H1 (cell line): ENCODE measurements at regions of chr2 and their contacts with region 1.

Region 1: GRCh38 chr2:64922482-64923384 is 66.5 kb upstream of the SLC1A4 start:
- DNase-seq: no peak
- H3K4me3 ChIP-seq: no peak overlapping the region
- H3K27ac ChIP-seq: no peak overlapping the region
- H3K4me1 ChIP-seq: peaks cover 0 to 10% (median 5%) of the 10 kb centered on the region in 4 experiments; a peak in 6 of 7 replicates
- H3K27me3 ChIP-seq: peaks cover 0 to 7% (median 3%) of the 10 kb centered on the region in 4 experiments; a peak in 3 of 7 replicates
- CTCF ChIP-seq: peak; percentile 50 to 65 (median 60)
- EP300 ChIP-seq: no peak
- POLR2A ChIP-seq: no peak
- RAD21 ChIP-seq: peak; percentile 41 to 65; a peak in 3 of 4 replicates

Region 2: DNA sequence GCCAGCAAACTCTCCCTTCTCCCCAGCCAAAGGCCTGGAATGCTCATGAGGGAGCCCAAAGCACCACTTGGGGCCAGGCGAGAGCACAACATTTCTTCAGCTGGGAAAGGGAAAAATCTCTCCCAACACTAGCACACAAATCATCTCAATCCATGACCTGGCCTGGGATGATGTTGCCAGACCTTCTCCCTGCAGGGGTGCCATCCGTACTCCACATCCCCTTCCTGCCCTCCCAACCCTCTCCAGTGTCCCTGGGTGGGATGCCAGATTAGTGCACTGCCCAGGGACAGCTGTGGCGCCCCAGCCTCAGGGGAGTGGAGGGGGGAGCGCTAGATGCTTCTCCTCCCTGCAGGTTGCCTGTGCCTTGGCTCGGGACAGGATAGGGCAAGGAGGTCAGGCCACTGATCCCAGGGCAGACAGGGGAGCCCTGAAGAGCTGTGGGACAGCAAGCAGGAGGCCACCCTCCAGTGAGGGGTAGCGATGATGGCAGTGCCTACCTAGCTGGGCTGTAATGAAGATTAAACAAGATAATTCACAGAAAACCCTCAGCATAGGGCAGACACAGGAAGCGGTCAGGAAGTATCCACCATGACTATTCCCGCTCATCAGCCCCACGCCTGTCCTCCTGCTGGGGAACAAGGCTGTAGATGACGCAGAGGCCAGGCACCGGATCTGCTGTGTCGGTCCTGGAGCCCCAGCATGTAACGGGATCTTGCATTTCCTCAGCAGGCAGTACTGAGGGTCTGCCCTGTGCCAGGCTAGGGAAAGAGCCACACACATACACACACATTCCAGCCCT is 300.1 kb before region 1 on chr2:
- CTCF ChIA-PET with region 1: no interaction called
- POLR2A ChIA-PET with region 1: no interaction called
- DNase-seq: peak in 1 of 2 experiments; percentile 53
- H3K4me3 ChIP-seq: no peak overlapping the region
- H3K27ac ChIP-seq: no peak overlapping the region
- H3K4me1 ChIP-seq: peaks cover 3 to 21% (median 13%) of the 10 kb centered on the region in 4 experiments; a peak in 6 of 7 replicates
- H3K27me3 ChIP-seq: no peaks in the 10 kb centered on the region
- CTCF ChIP-seq: peak; percentile 28 to 48 (median 43)
- EP300 ChIP-seq: no peak
- POLR2A ChIP-seq: no peak
- RAD21 ChIP-seq: peak; percentile 39 to 44

Region 3: DNA sequence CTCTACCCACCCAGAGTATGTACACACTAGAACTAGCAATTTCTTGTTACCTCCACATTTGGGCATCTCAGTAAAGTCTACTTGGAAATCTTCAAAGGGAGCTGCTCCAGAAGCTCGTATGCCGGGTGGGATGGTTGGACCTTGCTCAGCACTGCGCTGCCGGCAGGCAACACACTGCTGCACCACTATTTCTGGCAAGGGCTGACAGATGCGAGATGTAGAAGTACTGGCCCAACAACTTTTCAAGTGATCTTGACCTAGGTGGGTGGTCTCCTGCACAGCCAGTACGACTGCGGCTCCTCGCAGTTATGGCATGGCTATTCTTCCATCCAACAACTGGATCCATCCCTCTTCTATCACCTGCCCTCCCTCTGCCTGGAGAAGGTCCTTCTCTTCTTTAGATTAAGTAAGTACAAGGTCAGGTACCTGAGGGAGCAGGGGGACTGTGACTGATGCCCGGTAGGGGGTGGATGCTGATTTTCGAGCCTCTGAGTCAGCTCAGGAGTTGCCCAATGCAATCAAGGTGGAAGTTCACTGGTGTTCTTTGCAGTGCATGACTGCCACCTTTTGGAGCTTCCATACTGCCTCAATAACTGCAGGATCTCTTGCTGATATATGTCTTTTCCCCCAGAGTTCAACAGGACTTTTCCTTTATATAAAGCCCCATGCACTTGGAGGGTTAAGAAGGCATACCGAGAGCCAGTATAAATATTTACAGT is 34.0 kb before region 1 on chr2:
- CTCF ChIA-PET with region 1: interaction called, 10 read pairs
- POLR2A ChIA-PET with region 1: no interaction called
- DNase-seq: peak in 1 of 2 experiments; percentile 70
- H3K4me3 ChIP-seq: no peak overlapping the region
- H3K27ac ChIP-seq: no peak overlapping the region
- H3K4me1 ChIP-seq: no peaks in the 10 kb centered on the region
- H3K27me3 ChIP-seq: no peaks in the 10 kb centered on the region
- CTCF ChIP-seq: peak in 2 of 3 experiments; percentile 39 to 51; a peak in 3 of 4 replicates
- EP300 ChIP-seq: no peak
- POLR2A ChIP-seq: no peak
- RAD21 ChIP-seq: peak; percentile 73 to 75

Region 4: GRCh38 chr2:64904413-64905329 is 18.1 kb before region 1 on chr2:
- CTCF ChIA-PET with region 1: interaction called, 64 read pairs
- POLR2A ChIA-PET with region 1: interaction called, 3 read pairs
- DNase-seq: no peak
- H3K4me3 ChIP-seq: no peak overlapping the region
- H3K27ac ChIP-seq: no peak overlapping the region
- H3K4me1 ChIP-seq: peaks cover 0 to 5% (median 0%) of the 10 kb centered on the region in 4 experiments; a peak in 1 of 7 replicates
- H3K27me3 ChIP-seq: no peaks in the 10 kb centered on the region; a peak in 1 of 7 replicates
- CTCF ChIP-seq: no peak
- EP300 ChIP-seq: no peak
- POLR2A ChIP-seq: no peak
- RAD21 ChIP-seq: no peak

Region 5: DNA sequence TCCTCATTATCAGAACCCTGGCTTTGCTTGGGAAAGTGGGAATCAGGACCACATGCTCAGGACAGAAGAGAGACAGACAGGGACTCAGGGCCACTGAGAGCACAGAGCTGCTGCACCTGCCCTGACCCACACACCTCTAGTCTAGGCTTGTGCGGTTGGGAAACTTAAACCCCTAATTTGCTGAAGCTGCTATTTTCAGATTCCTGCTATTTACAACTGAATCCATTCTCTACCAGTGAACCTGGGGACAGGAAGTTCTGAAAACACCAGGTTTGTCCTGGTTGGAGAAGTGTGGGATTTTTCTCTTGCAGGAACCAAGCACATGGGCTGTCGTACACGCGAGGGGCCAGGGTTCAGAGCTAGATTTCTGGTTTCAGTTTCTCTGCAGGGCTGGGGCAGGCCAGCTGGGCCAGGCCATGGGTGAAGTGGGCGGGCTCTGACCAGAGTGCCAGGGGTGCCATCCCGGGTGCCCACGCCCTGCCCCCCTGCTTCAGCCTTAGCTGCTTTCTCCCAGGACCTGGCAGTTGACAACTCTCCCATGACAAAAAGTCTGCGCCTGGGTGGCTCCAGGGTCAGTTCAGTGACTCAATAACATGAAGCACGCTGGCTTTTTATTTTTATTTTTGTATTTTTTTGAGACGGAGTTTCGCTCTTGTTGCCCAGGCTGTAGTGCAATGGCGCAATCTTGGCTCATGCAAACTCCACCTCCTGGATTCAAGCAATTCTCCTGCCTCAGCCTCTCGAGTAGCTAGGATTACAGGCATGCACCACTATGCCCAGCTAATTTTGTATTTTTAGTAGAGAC is 15.2 kb after region 1 on chr2:
- CTCF ChIA-PET with region 1: interaction called, 27 read pairs
- POLR2A ChIA-PET with region 1: no interaction called
- DNase-seq: no peak
- H3K4me3 ChIP-seq: no peak overlapping the region
- H3K27ac ChIP-seq: no peak overlapping the region
- H3K4me1 ChIP-seq: peaks cover 0 to 5% (median 3%) of the 10 kb centered on the region in 4 experiments; a peak in 4 of 7 replicates
- H3K27me3 ChIP-seq: no peaks in the 10 kb centered on the region
- CTCF ChIP-seq: no peak
- EP300 ChIP-seq: no peak
- POLR2A ChIP-seq: no peak
- RAD21 ChIP-seq: no peak

Region 6: GRCh38 chr2:64943387-64944150 is 20.8 kb after region 1 on chr2:
- CTCF ChIA-PET with region 1: interaction called, 27 read pairs
- POLR2A ChIA-PET with region 1: interaction called, 3 read pairs
- DNase-seq: no peak
- H3K4me3 ChIP-seq: no peak overlapping the region
- H3K27ac ChIP-seq: no peak overlapping the region
- H3K4me1 ChIP-seq: peaks cover 0 to 5% (median 3%) of the 10 kb centered on the region in 4 experiments; a peak in 4 of 7 replicates
- H3K27me3 ChIP-seq: no peaks in the 10 kb centered on the region
- CTCF ChIP-seq: no peak
- EP300 ChIP-seq: no peak
- POLR2A ChIP-seq: no peak
- RAD21 ChIP-seq: no peak

Region 7: GRCh38 chr2:64978514-64979268 is 56.0 kb after region 1 on chr2:
- CTCF ChIA-PET with region 1: interaction called, 16 read pairs
- POLR2A ChIA-PET with region 1: no interaction called
- DNase-seq: no peak
- H3K4me3 ChIP-seq: no peak overlapping the region
- H3K27ac ChIP-seq: no peak overlapping the region
- H3K4me1 ChIP-seq: no peaks in the 10 kb centered on the region; a peak in 2 of 7 replicates
- H3K27me3 ChIP-seq: no peaks in the 10 kb centered on the region
- CTCF ChIP-seq: peak in 1 of 3 experiments; percentile 29; a peak in 1 of 4 replicates
- EP300 ChIP-seq: no peak
- POLR2A ChIP-seq: no peak
- RAD21 ChIP-seq: peak; percentile 17 to 35; a peak in 3 of 4 replicates